T-cell (primary cell): ENCODE measurements at regions of chr7 and their contacts with region 1.

Region 1: GRCh38 chr7:77989981-77990566 is 191.5 kb downstream of the PHTF2 start:
- DNase-seq: peak in 5 of 35 experiments; percentile 2 to 7 (median 3)
- ATAC-seq: no peak
- H3K4me3 ChIP-seq: no peak overlapping the region
- H3K4me3 Mint-ChIP-seq: no peak overlapping the region
- H3K27ac ChIP-seq: no peak overlapping the region
- H3K27ac Mint-ChIP-seq: no peak overlapping the region
- H3K4me1 ChIP-seq: no peaks in the 10 kb centered on the region
- H3K4me1 Mint-ChIP-seq: no peaks in the 10 kb centered on the region
- H3K27me3 ChIP-seq: peaks cover 0 to 3% of the 10 kb centered on the region in 2 experiments
- H3K27me3 Mint-ChIP-seq: peaks cover 0 to 5% of the 10 kb centered on the region in 2 donors

Region 2: DNA sequence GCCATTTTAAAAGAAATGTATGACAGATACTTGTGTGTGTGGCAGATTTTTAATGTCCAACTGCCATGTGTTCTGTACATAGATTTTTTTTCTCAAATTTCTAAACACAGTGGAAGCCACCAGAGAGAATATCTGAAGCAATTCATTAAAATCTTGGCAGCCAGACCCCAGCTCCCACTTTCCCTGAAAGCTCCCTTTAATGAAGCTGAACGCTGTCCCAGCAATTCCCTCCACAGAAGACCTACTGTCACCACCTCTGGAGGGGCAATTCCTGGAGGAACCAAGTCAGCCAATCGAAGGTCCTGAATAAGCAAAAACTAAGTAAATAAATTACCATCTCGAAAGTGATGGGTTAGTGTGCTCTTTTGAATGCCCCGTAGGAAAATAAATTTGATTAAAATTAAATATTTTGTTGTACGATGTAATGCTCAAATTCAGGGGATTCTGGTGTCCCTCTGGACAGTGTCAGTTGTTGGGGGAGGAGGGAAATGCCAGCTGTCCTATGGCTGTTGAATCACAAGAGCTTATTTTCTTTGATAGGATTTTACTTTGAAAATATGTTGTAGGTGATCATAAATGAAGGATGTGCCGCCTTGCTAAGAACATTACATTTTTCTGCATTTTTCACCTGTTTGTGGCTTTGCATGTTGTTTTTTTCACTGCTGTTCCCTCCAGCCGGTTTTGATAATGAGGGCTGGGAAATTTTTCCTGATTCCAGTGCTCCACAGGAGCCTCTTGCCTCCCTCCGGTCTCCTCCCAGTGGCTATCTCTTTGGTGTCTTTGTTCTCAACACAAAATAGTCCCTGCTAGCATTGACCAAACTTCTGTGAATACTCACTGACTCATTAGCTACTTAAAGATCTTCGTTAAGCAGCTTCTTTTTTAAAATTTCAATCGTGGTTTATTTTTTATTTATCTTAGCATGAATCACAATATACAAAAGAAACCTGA is 564.7 kb before region 1 on chr7:
- CTCF ChIA-PET with region 1: no interaction called
- POLR2A ChIA-PET with region 1: no interaction called
- DNase-seq: no peak
- ATAC-seq: no peak
- H3K4me3 ChIP-seq: no peak overlapping the region
- H3K4me3 Mint-ChIP-seq: no peak overlapping the region
- H3K27ac ChIP-seq: no peak overlapping the region
- H3K27ac Mint-ChIP-seq: no peak overlapping the region
- H3K4me1 ChIP-seq: peaks cover 14% of the 10 kb centered on the region in 2 experiments
- H3K4me1 Mint-ChIP-seq: peaks cover 24 to 37% (median 26%) of the 10 kb centered on the region in 3 donors
- H3K27me3 ChIP-seq: no peaks in the 10 kb centered on the region
- H3K27me3 Mint-ChIP-seq: peaks cover 7 to 11% of the 10 kb centered on the region in 2 donors

Region 3: DNA sequence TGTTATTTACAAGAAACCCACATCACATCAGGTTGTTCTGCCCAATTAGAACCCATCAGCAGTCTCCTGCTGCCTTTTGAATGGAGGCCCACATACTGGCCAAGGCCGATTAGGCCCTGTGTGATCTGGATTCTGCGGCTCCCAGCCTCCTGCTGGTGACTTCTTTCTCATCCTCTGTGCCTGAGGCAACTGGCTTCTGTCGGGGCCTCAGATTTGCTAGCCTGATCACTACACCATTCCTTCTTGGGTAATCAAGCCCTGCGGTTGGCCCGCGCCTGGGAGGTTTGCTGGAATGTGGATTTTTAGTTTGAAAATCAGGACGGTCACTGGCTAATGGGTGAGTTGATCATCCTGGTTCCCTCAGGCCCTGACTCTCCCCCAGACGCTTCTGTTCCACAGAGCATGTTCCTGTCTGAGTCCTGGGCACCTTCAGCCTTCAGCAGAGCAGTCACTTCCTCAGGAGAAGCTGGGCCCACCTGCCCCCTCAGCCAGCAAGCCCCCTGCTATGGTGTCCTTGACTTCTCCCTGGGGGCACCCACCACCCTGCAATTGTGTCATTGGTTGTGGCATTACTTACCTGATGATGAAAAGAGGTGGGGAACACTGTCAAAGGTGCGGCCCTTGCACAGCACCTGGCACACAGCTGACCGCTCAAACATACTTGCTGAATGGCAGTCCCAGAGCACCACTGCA is 16.1 kb after region 1 on chr7:
- CTCF ChIA-PET with region 1: interaction called in 1 of 2 experiments, 13 read pairs
- POLR2A ChIA-PET with region 1: no interaction called
- DNase-seq: no peak
- ATAC-seq: no peak
- H3K4me3 ChIP-seq: no peak overlapping the region
- H3K4me3 Mint-ChIP-seq: no peak overlapping the region
- H3K27ac ChIP-seq: no peak overlapping the region
- H3K27ac Mint-ChIP-seq: no peak overlapping the region
- H3K4me1 ChIP-seq: no peaks in the 10 kb centered on the region
- H3K4me1 Mint-ChIP-seq: no peaks in the 10 kb centered on the region
- H3K27me3 ChIP-seq: no peaks in the 10 kb centered on the region
- H3K27me3 Mint-ChIP-seq: no peaks in the 10 kb centered on the region